ENCODE measurements at regions of chr1 and their contacts with region 1.

Region 1: GRCh38 chr1:181936768-181937581 is 124.5 kb downstream of the ZNF648 start:
- DNase-seq: peak; percentile 60
- H3K4me3 ChIP-seq: no peak overlapping the region
- H3K27ac ChIP-seq: no peak overlapping the region
- H3K4me1 ChIP-seq: no peaks in the 10 kb centered on the region
- H3K27me3 ChIP-seq: peaks cover 30% of the 10 kb centered on the region
- CTCF ChIP-seq: peak; percentile 81

Region 2: DNA sequence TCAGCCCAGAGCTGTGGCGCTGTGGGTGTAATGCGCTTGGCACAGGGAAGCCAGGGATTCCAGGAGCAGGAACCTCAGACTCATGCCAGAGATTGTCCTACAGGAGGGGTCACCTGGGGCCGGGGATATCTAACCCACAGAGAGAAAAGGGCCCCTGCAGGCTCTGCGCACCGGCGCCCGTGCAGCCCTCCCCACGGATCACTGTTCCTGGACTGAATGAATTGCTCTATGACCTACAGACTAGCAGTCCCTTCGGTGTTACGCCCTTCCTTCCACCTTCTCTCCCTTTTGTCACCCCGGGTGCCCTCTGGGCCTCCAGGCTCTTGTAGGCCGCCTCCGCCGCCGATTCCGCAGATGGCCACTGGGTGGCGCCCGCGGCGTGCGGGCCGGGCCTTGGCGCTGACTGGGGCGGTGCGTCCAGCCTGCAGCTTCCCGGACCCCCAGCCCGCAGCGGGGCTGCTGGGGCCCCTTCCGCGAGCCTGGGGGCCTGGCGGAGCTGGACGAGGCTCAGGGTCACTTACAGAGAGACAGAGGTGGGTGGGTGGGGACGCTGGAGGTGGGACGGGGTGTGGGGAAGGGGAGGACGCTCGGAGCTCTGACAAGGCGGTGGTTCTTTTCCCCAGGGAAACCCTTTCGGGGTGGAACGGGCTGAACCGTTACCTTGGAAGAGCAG is 747.1 kb before region 1 on chr1:
- CTCF ChIA-PET with region 1: no interaction called
- POLR2A ChIA-PET with region 1: no interaction called
- intact Hi-C with region 1: loop called (anchors 10 kb)
- DNase-seq: peak; percentile 74
- H3K4me3 ChIP-seq: peak overlapping the region; percentile 43
- H3K27ac ChIP-seq: no peak overlapping the region
- H3K4me1 ChIP-seq: no peaks in the 10 kb centered on the region
- H3K27me3 ChIP-seq: no peaks in the 10 kb centered on the region
- CTCF ChIP-seq: peak; percentile 97

Region 3: GRCh38 chr1:181479137-181479745 is 457.7 kb before region 1 on chr1:
- CTCF ChIA-PET with region 1: interaction called, 11 read pairs
- POLR2A ChIA-PET with region 1: no interaction called
- intact Hi-C with region 1: loop called (anchors 1 kb)
- DNase-seq: peak; percentile 67
- H3K4me3 ChIP-seq: no peak overlapping the region
- H3K27ac ChIP-seq: no peak overlapping the region
- H3K4me1 ChIP-seq: no peaks in the 10 kb centered on the region
- H3K27me3 ChIP-seq: peaks cover 90% of the 10 kb centered on the region
- CTCF ChIP-seq: peak; percentile 79

Region 4: DNA sequence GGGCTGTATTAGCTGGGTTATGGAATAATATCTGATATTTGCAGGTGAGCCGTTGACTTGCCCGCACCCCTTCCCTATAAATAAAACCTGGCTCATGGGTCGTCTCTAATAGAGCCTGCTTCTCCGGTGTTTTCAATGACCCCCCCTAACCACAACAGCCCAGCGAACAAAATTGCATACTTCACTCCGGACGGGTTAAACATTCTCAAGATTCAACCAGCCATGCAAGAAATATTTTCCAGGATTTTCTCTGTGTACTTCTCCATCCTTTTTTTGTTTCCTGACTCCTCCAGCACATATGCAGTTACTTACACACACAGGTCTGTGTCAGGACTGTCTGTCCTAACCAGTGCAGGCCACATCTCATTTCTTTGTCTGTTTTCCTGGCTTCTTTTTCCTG is 143.1 kb before region 1 on chr1:
- CTCF ChIA-PET with region 1: no interaction called
- POLR2A ChIA-PET with region 1: no interaction called
- intact Hi-C with region 1: no loop called
- DNase-seq: no peak
- H3K4me3 ChIP-seq: no peak overlapping the region
- H3K27ac ChIP-seq: no peak overlapping the region
- H3K4me1 ChIP-seq: no peaks in the 10 kb centered on the region
- H3K27me3 ChIP-seq: peaks cover 50% of the 10 kb centered on the region
- CTCF ChIP-seq: no peak

Region 5: GRCh38 chr1:181818943-181819342 is 118.0 kb before region 1 on chr1:
- CTCF ChIA-PET with region 1: interaction called, 15 read pairs
- POLR2A ChIA-PET with region 1: no interaction called
- intact Hi-C with region 1: no loop called
- DNase-seq: peak; percentile 7
- H3K4me3 ChIP-seq: no peak overlapping the region
- H3K27ac ChIP-seq: no peak overlapping the region
- H3K4me1 ChIP-seq: no peaks in the 10 kb centered on the region
- H3K27me3 ChIP-seq: peaks cover 3% of the 10 kb centered on the region
- CTCF ChIP-seq: no peak

Measured in A673 (cell line).